ENCODE measurements at regions of chr11 and their contacts with region 1.

Region 1: GRCh38 chr11:129331871-129332274 is 43.8 kb upstream of the BARX2 start:
- DNase-seq: peak; percentile 79
- ATAC-seq: peak; percentile 94
- H3K4me3 ChIP-seq: no peak overlapping the region
- H3K27ac ChIP-seq: no peak overlapping the region
- H3K4me1 ChIP-seq: peaks cover 0 to 3% of the 10 kb centered on the region in 2 experiments; a peak in 1 of 4 replicates
- H3K27me3 ChIP-seq: no peaks in the 10 kb centered on the region
- CTCF ChIP-seq: peak; percentile 83 to 94 (median 86)
- POLR2A ChIP-seq: no peak
- RAD21 ChIP-seq: peak; percentile 100

Region 2: DNA sequence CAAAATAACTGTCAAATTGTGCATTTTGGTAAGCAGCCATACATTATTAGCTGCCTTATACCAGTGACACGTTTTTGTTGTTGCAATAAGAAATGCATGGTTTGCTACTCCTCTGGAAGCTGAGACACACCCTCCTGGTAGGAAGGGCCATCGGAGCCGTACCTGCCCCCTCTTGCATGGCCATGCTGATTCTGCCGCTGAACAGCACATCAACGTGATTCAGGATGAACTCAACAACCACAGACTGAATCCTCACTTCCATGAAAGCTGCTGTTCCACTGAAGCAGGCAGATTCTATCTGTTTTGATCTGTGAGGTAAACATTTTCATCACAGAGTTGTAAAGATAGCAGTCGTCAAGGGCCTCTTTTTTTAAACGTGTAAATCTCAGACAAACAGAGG is 350.6 kb before region 1 on chr11:
- CTCF ChIA-PET with region 1: no interaction called
- POLR2A ChIA-PET with region 1: no interaction called
- RAD21 ChIA-PET with region 1: no interaction called
- intact Hi-C with region 1: loop called (anchors 10 kb)
- DNase-seq: no peak
- ATAC-seq: no peak
- H3K4me3 ChIP-seq: no peak overlapping the region
- H3K27ac ChIP-seq: no peak overlapping the region
- H3K4me1 ChIP-seq: no peaks in the 10 kb centered on the region
- H3K27me3 ChIP-seq: no peaks in the 10 kb centered on the region
- CTCF ChIP-seq: no peak
- POLR2A ChIP-seq: no peak
- RAD21 ChIP-seq: no peak

Region 3: GRCh38 chr11:129117595-129118350 is 214.1 kb before region 1 on chr11:
- CTCF ChIA-PET with region 1: interaction called, 15 read pairs
- POLR2A ChIA-PET with region 1: no interaction called
- RAD21 ChIA-PET with region 1: interaction called, 3 to 7 read pairs
- intact Hi-C with region 1: loop called (anchors 1 kb)
- DNase-seq: peak; percentile 63
- ATAC-seq: peak; percentile 67; the same call in 1 of the 2 replicates
- H3K4me3 ChIP-seq: no peak overlapping the region
- H3K27ac ChIP-seq: no peak overlapping the region
- H3K4me1 ChIP-seq: peaks cover 5 to 12% of the 10 kb centered on the region in 2 experiments; a peak in 3 of 4 replicates
- H3K27me3 ChIP-seq: no peaks in the 10 kb centered on the region
- CTCF ChIP-seq: peak; percentile 71 to 95 (median 92)
- POLR2A ChIP-seq: no peak
- RAD21 ChIP-seq: peak; percentile 97

Region 4: DNA sequence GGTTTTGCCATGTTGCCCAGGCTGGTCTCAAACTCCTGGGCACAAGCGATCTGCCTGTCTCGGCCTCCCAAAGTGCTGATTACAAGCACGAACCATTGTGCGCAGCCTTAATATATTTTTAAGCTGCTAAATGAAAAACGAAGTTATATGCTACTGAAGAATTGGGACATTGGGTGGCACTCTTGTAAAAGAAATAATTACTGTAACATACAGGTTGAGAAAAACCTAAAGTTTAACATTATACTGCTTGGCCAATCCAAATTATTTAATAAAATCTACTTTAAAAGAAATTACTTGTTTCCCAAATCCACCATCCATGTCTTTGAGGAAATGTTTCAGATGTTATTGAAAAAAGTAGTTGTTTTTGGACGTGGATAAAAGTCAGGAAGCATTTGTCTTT is 101.9 kb before region 1 on chr11:
- CTCF ChIA-PET with region 1: interaction called, 4 read pairs
- POLR2A ChIA-PET with region 1: no interaction called
- RAD21 ChIA-PET with region 1: no interaction called
- intact Hi-C with region 1: loop called (anchors 1 kb)
- DNase-seq: no peak
- ATAC-seq: no peak
- H3K4me3 ChIP-seq: no peak overlapping the region
- H3K27ac ChIP-seq: no peak overlapping the region
- H3K4me1 ChIP-seq: no peaks in the 10 kb centered on the region
- H3K27me3 ChIP-seq: no peaks in the 10 kb centered on the region
- CTCF ChIP-seq: peak in 1 of 3 experiments; percentile 31; a peak in 1 of 6 replicates
- POLR2A ChIP-seq: no peak
- RAD21 ChIP-seq: peak; percentile 41; the same call in 1 of the 2 replicates

Region 5: GRCh38 chr11:129315781-129316481 is 15.9 kb before region 1 on chr11:
- CTCF ChIA-PET with region 1: interaction called, 13 read pairs
- POLR2A ChIA-PET with region 1: no interaction called
- RAD21 ChIA-PET with region 1: no interaction called
- intact Hi-C with region 1: no loop called
- DNase-seq: peak; percentile 32
- ATAC-seq: peak; percentile 85
- H3K4me3 ChIP-seq: no peak overlapping the region
- H3K27ac ChIP-seq: no peak overlapping the region
- H3K4me1 ChIP-seq: peaks cover 23 to 29% of the 10 kb centered on the region in 2 experiments
- H3K27me3 ChIP-seq: no peaks in the 10 kb centered on the region
- CTCF ChIP-seq: no peak
- POLR2A ChIP-seq: no peak
- RAD21 ChIP-seq: 0 out of 2 replicates have a peak, but pooled peaks have one; percentile 3

Region 6: DNA sequence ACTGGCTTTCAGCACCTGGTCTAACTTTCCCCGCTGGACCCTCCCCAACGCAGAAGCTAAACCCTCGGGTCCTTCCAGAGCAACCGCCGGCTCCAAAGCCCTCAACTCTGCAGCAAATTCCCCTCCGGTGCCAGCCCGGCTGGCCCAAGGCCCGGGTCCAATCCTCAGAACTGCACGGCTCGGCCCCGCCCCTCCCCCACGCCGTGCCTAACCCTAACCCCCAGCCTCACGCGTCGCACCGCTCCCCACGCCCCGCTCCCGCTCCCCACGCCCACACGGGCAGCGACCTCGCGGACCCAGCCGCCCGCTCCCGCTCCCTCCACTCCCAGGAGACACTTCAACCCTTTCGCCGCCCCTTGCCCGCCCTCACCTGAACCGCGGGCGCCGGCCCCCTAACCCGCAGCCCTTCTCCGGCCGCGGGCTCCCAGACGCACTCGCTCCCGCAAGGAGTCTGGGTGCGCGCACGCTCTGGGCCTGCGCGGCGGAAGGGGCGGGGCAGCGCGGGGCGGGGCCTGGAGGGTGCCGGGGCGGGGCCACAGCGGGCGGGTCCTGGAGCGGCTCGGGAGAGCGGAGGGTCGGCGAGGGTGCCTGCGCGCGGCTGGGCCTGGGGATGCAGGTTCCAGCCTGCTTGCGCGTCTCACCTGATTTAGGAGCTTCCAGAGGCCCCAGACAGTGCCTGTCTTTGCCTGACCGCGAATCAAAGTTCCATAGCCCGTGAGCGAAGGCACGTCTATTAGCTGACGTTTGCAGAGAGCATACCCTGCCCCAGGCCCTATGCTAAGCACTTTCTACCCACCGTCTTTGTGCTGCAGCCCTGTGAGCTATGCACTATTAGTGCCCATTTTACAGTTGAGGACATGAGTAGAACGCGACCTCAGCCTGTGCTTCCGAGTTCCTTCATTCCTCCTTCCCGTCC is 563.5 kb after region 1 on chr11 and contains the start of gene NFRKB:
- CTCF ChIA-PET with region 1: no interaction called
- POLR2A ChIA-PET with region 1: no interaction called
- RAD21 ChIA-PET with region 1: no interaction called
- intact Hi-C with region 1: no loop called
- DNase-seq: peak; percentile 18
- ATAC-seq: peak; percentile 97
- H3K4me3 ChIP-seq: peak within 1 kb of the TSS; percentile 81 to 92
- H3K27ac ChIP-seq: peak within 1 kb of the TSS; percentile 53; the same call in 1 of the 2 replicates
- H3K4me1 ChIP-seq: peaks cover 3 to 12% of the 10 kb centered on the region in 2 experiments; a peak in 3 of 4 replicates
- H3K27me3 ChIP-seq: no peaks in the 10 kb centered on the region
- CTCF ChIP-seq: no peak
- POLR2A ChIP-seq: peak; percentile 71
- RAD21 ChIP-seq: no peak
- total RNA-seq, gene NFRKB: 27.4 TPM

Measured in HCT116 (cell line).